Activated CD4-positive, alpha-beta T cell treated with anti-CD3 and anti-CD28 coated beads, Interleukin-2, amount 10 ng/mL, durations not matched to agents 24 days and 14 days (primary cell): ENCODE measurements at regions of chr7 and their contacts with region 1.

Region 1: DNA sequence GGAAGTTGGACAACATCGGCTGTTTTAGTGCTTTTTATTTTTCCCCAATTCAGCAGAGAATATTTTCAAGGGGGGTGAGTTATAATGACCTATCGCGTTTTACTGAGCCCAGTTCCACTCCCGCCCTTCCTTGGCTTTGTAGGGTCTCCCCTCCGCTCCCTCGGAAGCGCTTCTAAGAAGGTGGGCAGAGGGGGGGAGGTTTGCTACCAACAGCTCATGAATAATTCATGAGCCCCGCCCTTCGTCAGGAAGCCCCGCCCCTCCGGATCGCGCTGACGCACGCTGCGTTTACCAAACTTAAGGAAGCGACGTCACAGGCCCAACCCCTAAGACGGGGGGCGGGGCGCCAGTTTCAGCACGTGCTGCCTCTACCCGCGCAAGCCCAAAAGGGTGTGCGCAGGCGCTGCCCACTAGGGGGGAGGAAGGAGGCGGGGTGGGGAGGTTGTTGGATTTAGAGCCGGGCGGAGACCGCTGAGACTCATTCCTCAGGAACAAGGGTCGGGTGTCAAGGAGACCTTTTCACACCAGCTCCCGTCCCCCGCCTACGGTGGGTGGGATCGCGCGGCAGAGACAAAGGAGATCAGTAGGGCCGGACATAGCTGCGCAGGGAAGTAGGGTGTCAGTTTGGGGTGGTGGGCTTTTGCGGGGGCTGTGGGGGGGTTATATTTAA is 529 bp upstream of the MEPCE start:
- DNase-seq: peak; percentile 100
- H3K4me3 Mint-ChIP-seq: peak overlapping the region; percentile 95
- H3K27ac Mint-ChIP-seq: peak overlapping the region; percentile 97
- H3K4me1 Mint-ChIP-seq: peaks cover 43% of the 10 kb centered on the region
- H3K27me3 Mint-ChIP-seq: peaks cover 11% of the 10 kb centered on the region

Region 2: DNA sequence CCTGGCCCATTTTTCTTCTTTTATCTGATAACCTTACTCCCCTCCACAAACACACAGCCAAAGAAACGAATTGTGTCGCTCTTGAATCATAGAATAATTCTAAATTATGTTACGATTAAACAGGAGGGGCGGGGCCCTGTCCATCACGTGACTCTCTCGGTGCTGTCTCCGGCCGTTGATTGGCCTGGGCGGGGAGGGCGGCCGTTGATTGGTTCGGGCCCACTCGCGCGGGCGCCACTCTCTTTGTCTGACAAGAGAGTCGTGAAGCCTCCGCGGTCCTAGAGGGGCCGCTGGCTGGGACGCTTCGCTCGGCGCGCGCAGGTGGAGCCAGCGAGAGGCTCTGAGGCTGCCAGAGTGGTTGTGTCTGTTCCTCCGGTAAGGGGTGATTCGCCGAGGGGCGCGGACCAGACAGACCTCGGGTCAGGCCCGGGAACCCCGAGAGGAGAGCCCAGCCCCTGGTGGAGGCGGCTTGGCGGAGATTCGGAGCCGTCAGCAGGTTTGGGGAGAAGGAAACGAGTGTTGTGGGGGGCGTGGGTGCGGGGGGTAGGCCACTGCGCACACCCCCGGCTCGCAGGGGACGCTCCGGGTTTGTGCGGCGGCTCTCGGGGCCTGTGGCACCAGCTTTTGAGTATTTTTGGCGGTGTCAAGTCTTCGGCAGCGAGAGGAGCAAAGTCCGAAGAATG is 956.4 kb before region 1 on chr7 and contains the start of gene ZNF789:
- intact Hi-C with region 1: loop called (anchors 2 kb)
- DNase-seq: peak; percentile 99
- H3K4me3 Mint-ChIP-seq: peak within 1 kb of the TSS; percentile 100
- H3K27ac Mint-ChIP-seq: peak within 1 kb of the TSS; percentile 93
- H3K4me1 Mint-ChIP-seq: peaks cover 28% of the 10 kb centered on the region
- H3K27me3 Mint-ChIP-seq: peaks cover 1% of the 10 kb centered on the region
- total RNA-seq, gene ZNF789: 22.6 and 23.6 TPM in 2 replicates

Region 3: DNA sequence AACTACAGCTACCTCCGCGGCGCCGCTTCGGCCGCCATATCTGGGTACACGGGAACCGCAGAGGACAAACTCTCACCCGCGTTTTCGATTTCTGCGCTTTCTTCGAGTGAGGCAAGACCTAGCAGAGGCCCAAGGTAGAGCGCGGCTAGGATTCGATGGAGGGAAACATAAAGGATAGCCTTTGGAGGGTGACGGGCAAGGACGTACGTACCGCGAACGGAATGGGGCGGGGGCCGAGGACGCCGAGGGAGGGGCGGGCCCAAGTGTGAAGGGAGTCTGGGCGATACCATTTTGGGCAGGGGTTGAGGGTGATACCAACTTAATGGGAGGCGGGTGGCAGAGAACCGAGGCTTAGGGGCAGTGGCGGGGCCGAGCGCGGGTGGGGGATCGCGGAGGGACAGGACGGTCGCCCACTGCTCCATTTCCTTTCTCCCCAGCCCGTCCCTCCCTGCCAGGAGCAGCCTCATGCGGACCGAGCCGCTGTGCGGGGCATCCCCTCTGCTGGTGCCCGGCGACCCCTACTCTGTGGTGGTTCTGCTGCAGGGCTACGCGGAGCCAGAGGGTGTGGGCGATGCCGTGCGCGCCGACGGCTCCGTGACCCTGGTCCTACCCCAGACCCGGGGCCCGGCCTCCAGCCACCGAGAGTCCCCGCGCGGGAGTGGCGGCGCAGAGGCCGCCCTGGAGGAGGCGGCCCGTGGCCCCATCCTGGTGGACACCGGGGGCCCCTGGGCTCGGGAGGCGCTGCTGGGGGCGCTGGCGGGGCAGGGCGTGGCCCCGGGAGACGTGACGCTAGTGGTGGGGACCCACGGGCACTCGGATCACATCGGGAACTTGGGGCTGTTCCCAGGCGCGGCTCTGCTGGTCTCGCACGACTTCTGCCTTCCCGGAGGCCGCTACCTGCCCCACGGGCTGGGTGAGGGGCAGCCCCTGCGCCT is 301.9 kb before region 1 on chr7 and contains the start of gene MBLAC1:
- intact Hi-C with region 1: loop called (anchors 2 kb)
- DNase-seq: peak; percentile 97
- H3K4me3 Mint-ChIP-seq: peak within 1 kb of the TSS; percentile 99
- H3K27ac Mint-ChIP-seq: peak within 1 kb of the TSS; percentile 100
- H3K4me1 Mint-ChIP-seq: peaks cover 22% of the 10 kb centered on the region
- H3K27me3 Mint-ChIP-seq: no peaks in the 10 kb centered on the region
- total RNA-seq, gene MBLAC1: 3.0 and 3.5 TPM in 2 replicates

Region 4: GRCh38 chr7:100342765-100343164 is 86.3 kb before region 1 on chr7:
- intact Hi-C with region 1: loop called (anchors 2 kb)
- DNase-seq: no peak
- H3K4me3 Mint-ChIP-seq: no peak overlapping the region
- H3K27ac Mint-ChIP-seq: no peak overlapping the region
- H3K4me1 Mint-ChIP-seq: peaks cover 30% of the 10 kb centered on the region
- H3K27me3 Mint-ChIP-seq: peaks cover 2% of the 10 kb centered on the region

Region 5: GRCh38 chr7:100478966-100479665 is 50.0 kb after region 1 on chr7 and contains the start of gene TSC22D4:
- intact Hi-C with region 1: loop called (anchors 1 kb)
- DNase-seq: peak; percentile 96
- H3K4me3 Mint-ChIP-seq: peak within 1 kb of the TSS; percentile 92
- H3K27ac Mint-ChIP-seq: peak within 1 kb of the TSS; percentile 88
- H3K4me1 Mint-ChIP-seq: peaks cover 35% of the 10 kb centered on the region
- H3K27me3 Mint-ChIP-seq: no peaks in the 10 kb centered on the region
- total RNA-seq, gene TSC22D4: 113 and 121 TPM in 2 replicates

Region 6: DNA sequence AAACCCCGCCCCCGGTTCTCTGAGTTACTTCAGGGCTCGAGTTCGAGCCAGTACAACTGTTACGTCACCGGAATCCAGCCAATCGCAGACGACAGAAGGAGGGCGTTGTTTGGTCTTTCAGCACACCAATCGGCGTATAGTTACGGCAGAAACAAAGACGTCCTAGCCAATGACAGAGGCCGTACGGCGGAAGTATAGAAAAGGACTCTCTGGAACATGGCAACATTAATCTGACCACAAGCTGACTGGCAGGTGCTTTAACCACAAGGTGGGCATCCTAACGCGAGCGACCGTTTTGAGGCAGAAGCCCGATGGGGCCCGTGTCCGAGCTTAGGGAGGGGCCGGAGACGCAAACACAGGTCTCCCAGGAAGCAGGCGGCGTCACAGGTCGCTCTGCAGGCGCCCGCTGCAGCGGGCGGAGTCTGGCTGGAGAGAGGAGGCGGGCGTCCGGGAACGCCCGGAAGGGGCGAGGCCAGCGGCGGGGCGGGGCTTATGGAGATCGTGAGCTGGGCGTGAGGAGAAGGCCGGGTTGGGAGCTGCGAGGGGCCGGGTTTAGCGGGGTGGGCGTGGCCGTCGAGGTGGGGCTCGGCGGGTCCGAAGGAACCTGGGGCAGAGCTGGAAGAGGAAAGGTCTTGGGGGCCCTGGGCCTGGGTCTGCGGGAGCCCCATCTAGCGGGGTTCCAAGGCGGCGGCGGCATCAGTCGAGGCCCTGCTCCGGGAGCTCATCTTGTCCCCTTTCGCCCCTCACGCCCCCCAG is 183.1 kb after region 1 on chr7 and contains the start of gene MOSPD3:
- intact Hi-C with region 1: loop called (anchors 1 kb)
- DNase-seq: peak; percentile 100
- H3K4me3 Mint-ChIP-seq: peak within 1 kb of the TSS; percentile 97
- H3K27ac Mint-ChIP-seq: peak within 1 kb of the TSS; percentile 100
- H3K4me1 Mint-ChIP-seq: peaks cover 18% of the 10 kb centered on the region
- H3K27me3 Mint-ChIP-seq: peaks cover 9% of the 10 kb centered on the region
- total RNA-seq, gene MOSPD3: 11.3 and 12.1 TPM in 2 replicates